Body of pancreas (tissue), 4 donors: ENCODE measurements at regions of chr20 and their contacts with region 1.

Region 1: DNA sequence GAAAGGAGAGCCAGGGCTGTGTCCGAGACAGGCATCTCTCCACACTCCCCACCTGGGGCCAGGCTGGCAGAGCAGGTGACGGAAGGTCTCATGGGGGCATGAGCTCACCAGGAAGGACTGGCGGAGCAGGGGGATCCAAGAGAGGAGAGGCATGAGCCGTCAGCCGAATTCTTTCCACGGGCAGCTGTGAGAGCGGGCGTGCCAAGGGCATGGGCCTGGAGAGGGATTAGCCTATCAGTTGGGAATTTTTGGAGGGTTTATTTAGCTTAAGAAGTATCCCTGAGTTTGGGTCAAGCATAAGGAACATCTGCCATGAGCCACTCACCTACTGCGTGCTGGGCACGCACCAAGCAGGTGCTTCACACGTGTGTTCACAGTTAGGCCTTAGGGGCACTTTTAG is 60.2 kb upstream of the ZNFX1 start:
- DNase-seq: no peak
- ATAC-seq: no peak
- H3K4me3 ChIP-seq: no peak overlapping the region
- H3K27ac ChIP-seq: no peak overlapping the region
- H3K4me1 ChIP-seq: no peaks in the 10 kb centered on the region
- H3K27me3 ChIP-seq: no peaks in the 10 kb centered on the region
- CTCF ChIP-seq: no peak
- POLR2A ChIP-seq: no peak

Region 2: GRCh38 chr20:49405111-49405551 is 67.1 kb after region 1 on chr20:
- intact Hi-C with region 1: no loop called
- DNase-seq: no peak
- ATAC-seq: no peak
- H3K4me3 ChIP-seq: no peak overlapping the region
- H3K27ac ChIP-seq: no peak overlapping the region
- H3K4me1 ChIP-seq: no peaks in the 10 kb centered on the region
- H3K27me3 ChIP-seq: no peaks in the 10 kb centered on the region
- CTCF ChIP-seq: no peak
- POLR2A ChIP-seq: no peak

Region 3: GRCh38 chr20:49508435-49509199 is 170.6 kb after region 1 on chr20:
- intact Hi-C with region 1: loop called (anchors 10 kb)
- DNase-seq: peak in 1 of 4 donors; percentile 12
- ATAC-seq: peak; percentile 33
- H3K4me3 ChIP-seq: no peak overlapping the region
- H3K27ac ChIP-seq: no peak overlapping the region
- H3K4me1 ChIP-seq: no peaks in the 10 kb centered on the region
- H3K27me3 ChIP-seq: peaks cover 0 to 3% of the 10 kb centered on the region in 2 donors
- CTCF ChIP-seq: peak in 6 of 7 experiments; percentile 28 to 62 (median 55)
- POLR2A ChIP-seq: no peak

Region 4: DNA sequence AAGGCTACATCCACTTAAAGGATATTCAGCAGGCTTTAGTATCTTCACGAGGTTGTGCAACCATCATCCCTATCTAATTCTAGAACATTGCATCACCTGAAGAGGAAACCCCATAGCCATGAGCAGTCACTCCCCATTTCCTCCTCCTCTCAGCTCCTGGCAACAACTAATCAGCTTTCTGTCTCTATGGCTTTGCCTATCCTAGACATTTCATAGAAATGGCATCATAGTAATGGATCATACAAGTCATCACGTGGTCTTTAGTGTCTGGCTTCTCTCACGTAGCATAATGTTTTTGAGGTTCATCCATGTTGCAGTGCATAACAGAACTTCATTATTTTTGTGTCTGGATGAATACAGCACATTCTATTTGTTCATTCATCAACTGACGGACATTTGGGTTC is 665.2 kb after region 1 on chr20:
- intact Hi-C with region 1: no loop called
- DNase-seq: no peak
- ATAC-seq: peak; percentile 52
- H3K4me3 ChIP-seq: no peak overlapping the region
- H3K27ac ChIP-seq: no peak overlapping the region
- H3K4me1 ChIP-seq: no peaks in the 10 kb centered on the region
- H3K27me3 ChIP-seq: no peaks in the 10 kb centered on the region
- CTCF ChIP-seq: no peak
- POLR2A ChIP-seq: no peak